ENCODE measurements at regions of chr17 and their contacts with region 1.

Region 1: GRCh38 chr17:5468075-5468473 is 708 bp downstream of the DHX33 start:
- DNase-seq: peak; percentile 19
- H3K4me3 Mint-ChIP-seq: peak overlapping the region; percentile 81
- H3K27ac Mint-ChIP-seq: peak overlapping the region; percentile 76
- H3K4me1 Mint-ChIP-seq: peaks cover 42% of the 10 kb centered on the region
- H3K27me3 Mint-ChIP-seq: no peaks in the 10 kb centered on the region

Region 2: DNA sequence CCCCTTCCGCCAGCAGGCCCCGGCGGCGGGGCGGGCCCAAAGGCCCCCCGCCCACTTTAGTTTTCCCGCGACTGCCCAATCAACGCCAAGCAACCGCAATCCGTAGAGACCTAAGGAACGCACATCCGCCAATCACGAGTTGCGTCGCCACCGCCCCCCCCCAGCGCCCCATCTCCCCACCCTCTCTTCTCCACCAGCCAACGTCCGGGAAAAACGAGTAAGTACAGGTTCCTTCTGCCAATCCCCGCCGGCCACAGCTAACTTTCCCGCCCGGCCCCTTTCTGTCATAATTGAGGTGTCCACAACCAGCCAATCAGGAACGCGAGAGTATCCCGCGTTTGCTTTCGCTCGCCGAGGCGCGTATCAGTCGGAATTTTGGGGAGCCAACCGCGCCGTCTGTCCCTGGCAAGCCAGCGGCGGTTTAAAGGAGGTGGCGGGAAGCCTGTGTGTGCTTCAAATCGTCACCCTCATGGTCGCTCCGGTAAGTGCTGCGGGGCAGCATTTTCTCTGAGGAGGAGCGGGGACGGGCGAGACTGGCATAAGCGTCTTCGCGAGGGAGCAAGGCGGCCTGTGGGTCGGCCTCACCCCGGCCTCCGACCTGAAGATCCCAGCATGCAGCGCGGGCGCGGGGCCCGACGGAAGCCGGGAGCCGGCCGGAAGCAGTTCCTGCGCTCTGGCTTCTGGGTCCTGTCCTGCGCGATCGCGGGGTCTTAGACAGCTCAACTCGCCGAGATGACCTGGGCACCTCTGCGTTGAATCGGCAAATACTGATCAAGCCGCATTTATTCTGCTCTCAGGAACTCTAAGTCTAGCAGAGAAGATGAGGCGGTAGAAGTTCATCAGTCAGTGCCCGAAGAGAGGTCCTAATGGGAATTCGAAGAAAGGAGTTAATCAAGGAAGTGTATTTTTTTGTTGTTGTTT is 18.4 kb after region 1 on chr17 and contains the start of gene MIS12:
- CTCF ChIA-PET with region 1: interaction called, 10 read pairs
- POLR2A ChIA-PET with region 1: interaction called, 4 read pairs
- DNase-seq: peak; percentile 99
- H3K4me3 Mint-ChIP-seq: peak within 1 kb of the TSS; percentile 88
- H3K27ac Mint-ChIP-seq: peak within 1 kb of the TSS; percentile 99
- H3K4me1 Mint-ChIP-seq: peaks cover 45% of the 10 kb centered on the region
- H3K27me3 Mint-ChIP-seq: no peaks in the 10 kb centered on the region
- total RNA-seq, gene MIS12: 33.1 to 39.8 TPM